Panc1 (cell line): ENCODE measurements at regions of chr20 and their contacts with region 1.

Region 1: GRCh38 chr20:19113343-19113930 is 99.0 kb upstream of the SLC24A3 start:
- DNase-seq: no peak
- ATAC-seq: no peak
- H3K4me3 ChIP-seq: no peak overlapping the region
- H3K27ac ChIP-seq: no peak overlapping the region
- H3K4me1 ChIP-seq: no peaks in the 10 kb centered on the region
- H3K27me3 ChIP-seq: no peaks in the 10 kb centered on the region
- CTCF ChIP-seq: no peak

Region 2: GRCh38 chr20:19012676-19013075 is 100.8 kb before region 1 on chr20:
- CTCF ChIA-PET with region 1: no interaction called
- POLR2A ChIA-PET with region 1: no interaction called
- in situ Hi-C with region 1: no loop called
- intact Hi-C with region 1: no loop called
- DNase-seq: no peak
- ATAC-seq: no peak
- H3K4me3 ChIP-seq: no peak overlapping the region
- H3K27ac ChIP-seq: no peak overlapping the region
- H3K4me1 ChIP-seq: no peaks in the 10 kb centered on the region
- H3K27me3 ChIP-seq: no peaks in the 10 kb centered on the region; the same call in 1 of the 2 replicates
- CTCF ChIP-seq: no peak

Region 3: GRCh38 chr20:19161336-19161735 is 47.9 kb after region 1 on chr20:
- CTCF ChIA-PET with region 1: interaction called, 10 read pairs
- POLR2A ChIA-PET with region 1: no interaction called
- in situ Hi-C with region 1: no loop called
- intact Hi-C with region 1: no loop called
- DNase-seq: no peak
- ATAC-seq: no peak
- H3K4me3 ChIP-seq: no peak overlapping the region
- H3K27ac ChIP-seq: no peak overlapping the region
- H3K4me1 ChIP-seq: no peaks in the 10 kb centered on the region
- H3K27me3 ChIP-seq: no peaks in the 10 kb centered on the region
- CTCF ChIP-seq: no peak

Region 4: GRCh38 chr20:19361790-19362189 is 248.4 kb after region 1 on chr20:
- CTCF ChIA-PET with region 1: no interaction called
- POLR2A ChIA-PET with region 1: no interaction called
- in situ Hi-C with region 1: no loop called
- intact Hi-C with region 1: no loop called
- DNase-seq: no peak
- ATAC-seq: no peak
- H3K4me3 ChIP-seq: no peak overlapping the region
- H3K27ac ChIP-seq: no peak overlapping the region
- H3K4me1 ChIP-seq: no peaks in the 10 kb centered on the region
- H3K27me3 ChIP-seq: no peaks in the 10 kb centered on the region
- CTCF ChIP-seq: no peak